ENCODE measurements at regions of chr16 and their contacts with region 1.

Region 1: GRCh38 chr16:30065143-30065850 is at the start of gene ALDOA:
- DNase-seq: peak; percentile 96
- H3K4me3 ChIP-seq: peak within 1 kb of the TSS; percentile 92 to 98
- H3K27ac ChIP-seq: peak within 1 kb of the TSS; percentile 98 to 99
- H3K4me1 ChIP-seq: peaks cover 39 to 45% of the 10 kb centered on the region in 2 experiments
- H3K27me3 ChIP-seq: no peaks in the 10 kb centered on the region
- CTCF ChIP-seq: no peak
- EP300 ChIP-seq: peak; percentile 28 to 62; a peak in 2 of 4 replicates
- RAD21 ChIP-seq: no peak
- polyA plus RNA-seq, gene ALDOA: 437 and 641 TPM in 2 replicates

Region 2: GRCh38 chr16:30052671-30053372 is 12.5 kb before region 1 on chr16:
- CTCF ChIA-PET with region 1: interaction called, 24 read pairs
- POLR2A ChIA-PET with region 1: interaction called, 19 read pairs
- DNase-seq: peak; percentile 97
- H3K4me3 ChIP-seq: peak overlapping the region; percentile 68 to 97
- H3K27ac ChIP-seq: peak overlapping the region; percentile 58 to 70; a peak in 3 of 4 replicates
- H3K4me1 ChIP-seq: peaks cover 5% of the 10 kb centered on the region in 2 experiments; a peak in 2 of 4 replicates
- H3K27me3 ChIP-seq: no peaks in the 10 kb centered on the region
- CTCF ChIP-seq: no peak
- EP300 ChIP-seq: peak; percentile 26 to 33; a peak in 2 of 4 replicates
- RAD21 ChIP-seq: no peak

Region 3: GRCh38 chr16:30075507-30076275 is 10.4 kb after region 1 on chr16 and contains the start of gene PPP4C:
- CTCF ChIA-PET with region 1: interaction called, 4 read pairs
- POLR2A ChIA-PET with region 1: interaction called, 15 read pairs
- DNase-seq: peak; percentile 97
- H3K4me3 ChIP-seq: peak within 1 kb of the TSS; percentile 76 to 78
- H3K27ac ChIP-seq: peak within 1 kb of the TSS; percentile 47 to 90
- H3K4me1 ChIP-seq: peaks cover 5 to 18% of the 10 kb centered on the region in 2 experiments; a peak in 3 of 4 replicates
- H3K27me3 ChIP-seq: no peaks in the 10 kb centered on the region
- CTCF ChIP-seq: no peak; the same call in 1 of the 2 replicates
- EP300 ChIP-seq: peak in 1 of 2 experiments; percentile 53; a peak in 1 of 4 replicates
- RAD21 ChIP-seq: no peak
- polyA plus RNA-seq, gene PPP4C: 325 and 339 TPM in 2 replicates